H1 (cell line): ENCODE measurements at regions of chr17 and their contacts with region 1.

Region 1: DNA sequence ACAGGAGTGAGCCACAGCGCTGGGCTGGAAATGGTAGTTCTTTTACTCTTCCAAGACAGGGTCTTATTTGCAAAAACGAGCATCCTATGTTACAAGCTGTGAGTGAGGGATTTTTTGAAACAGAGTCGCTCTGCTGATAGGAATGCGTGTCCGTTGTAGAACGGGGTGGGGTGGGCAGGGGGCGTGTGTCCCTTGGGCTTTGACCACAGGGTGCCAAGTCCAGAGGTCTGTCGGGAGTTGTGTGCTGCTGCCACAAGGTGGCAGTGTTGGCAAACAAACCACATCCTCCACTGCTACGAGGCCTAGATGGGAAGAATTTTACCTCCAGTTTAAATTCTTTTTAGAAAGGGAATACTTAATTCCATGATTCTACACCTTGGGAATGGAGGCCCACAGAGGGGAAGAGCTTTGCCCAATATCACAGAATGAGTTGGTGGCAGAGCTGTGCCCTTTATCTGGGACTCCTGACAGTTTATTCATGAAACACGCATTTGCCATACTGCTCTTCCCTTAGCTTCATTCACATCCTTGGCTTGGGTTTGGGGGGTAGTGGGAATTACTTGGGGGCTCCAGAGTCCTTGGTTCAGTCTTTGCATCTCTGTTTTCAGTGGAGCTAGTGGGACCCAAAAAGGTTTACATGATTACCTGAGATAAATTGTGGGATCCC is 30.6 kb upstream of the ETV4 start:
- DNase-seq: peak; percentile 73 to 84
- H3K4me3 ChIP-seq: peak overlapping the region in 3 of 4 experiments; percentile 28 to 46 (median 37); a peak in 3 of 8 replicates
- H3K27ac ChIP-seq: no peak overlapping the region
- H3K4me1 ChIP-seq: peaks cover 6 to 21% (median 13%) of the 10 kb centered on the region in 4 experiments; a peak in 5 of 7 replicates
- H3K27me3 ChIP-seq: no peaks in the 10 kb centered on the region
- CTCF ChIP-seq: peak; percentile 86 to 97 (median 91)
- EP300 ChIP-seq: no peak
- POLR2A ChIP-seq: no peak
- RAD21 ChIP-seq: peak; percentile 99

Region 2: GRCh38 chr17:43524945-43525575 is 51.6 kb before region 1 on chr17:
- CTCF ChIA-PET with region 1: interaction called, 45 read pairs
- POLR2A ChIA-PET with region 1: interaction called, 7 read pairs
- DNase-seq: no peak
- H3K4me3 ChIP-seq: no peak overlapping the region
- H3K27ac ChIP-seq: no peak overlapping the region
- H3K4me1 ChIP-seq: peaks cover 11 to 32% (median 16%) of the 10 kb centered on the region in 4 experiments
- H3K27me3 ChIP-seq: no peaks in the 10 kb centered on the region
- CTCF ChIP-seq: no peak
- EP300 ChIP-seq: no peak
- POLR2A ChIP-seq: no peak
- RAD21 ChIP-seq: no peak

Region 3: DNA sequence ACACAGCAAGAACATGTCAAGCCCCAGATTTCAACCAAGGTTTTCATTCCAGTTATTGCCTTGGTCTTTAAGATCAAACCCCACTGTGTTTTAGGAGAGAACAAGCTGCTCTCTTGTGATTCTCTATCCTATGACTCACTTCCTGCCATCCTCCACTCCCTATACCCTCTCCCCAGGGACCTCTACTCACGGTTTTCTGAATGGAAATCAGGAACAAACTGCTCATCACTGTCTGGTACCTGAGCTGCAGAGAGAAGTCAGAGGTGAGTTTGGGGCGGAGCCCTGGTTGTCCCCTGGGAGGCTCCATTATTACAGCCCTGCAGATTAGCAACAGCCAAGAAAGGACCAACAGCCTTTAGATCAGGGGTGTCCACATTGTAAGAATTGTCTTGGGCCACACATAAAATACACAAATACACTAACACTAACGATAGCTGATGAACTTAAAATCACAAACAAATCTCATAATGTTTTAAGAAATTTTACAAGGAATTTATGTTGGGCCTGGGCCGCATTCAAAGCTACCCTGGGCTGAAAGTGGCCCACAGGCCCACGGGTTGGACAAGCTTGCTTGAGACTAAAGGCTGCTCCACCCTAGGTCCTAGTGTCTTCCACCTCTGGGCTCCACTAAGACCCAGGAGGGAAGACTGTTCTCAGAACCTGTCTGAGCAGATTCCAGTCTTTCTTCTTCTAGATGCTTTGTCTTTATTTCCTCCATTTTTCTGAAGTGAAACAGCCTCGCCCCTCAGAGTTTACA is 40.3 kb before region 1 on chr17:
- CTCF ChIA-PET with region 1: interaction called, 29 read pairs
- POLR2A ChIA-PET with region 1: no interaction called
- DNase-seq: no peak
- H3K4me3 ChIP-seq: no peak overlapping the region
- H3K27ac ChIP-seq: no peak overlapping the region
- H3K4me1 ChIP-seq: peaks cover 11 to 26% (median 12%) of the 10 kb centered on the region in 4 experiments
- H3K27me3 ChIP-seq: no peaks in the 10 kb centered on the region
- CTCF ChIP-seq: no peak
- EP300 ChIP-seq: no peak
- POLR2A ChIP-seq: no peak
- RAD21 ChIP-seq: no peak

Region 4: DNA sequence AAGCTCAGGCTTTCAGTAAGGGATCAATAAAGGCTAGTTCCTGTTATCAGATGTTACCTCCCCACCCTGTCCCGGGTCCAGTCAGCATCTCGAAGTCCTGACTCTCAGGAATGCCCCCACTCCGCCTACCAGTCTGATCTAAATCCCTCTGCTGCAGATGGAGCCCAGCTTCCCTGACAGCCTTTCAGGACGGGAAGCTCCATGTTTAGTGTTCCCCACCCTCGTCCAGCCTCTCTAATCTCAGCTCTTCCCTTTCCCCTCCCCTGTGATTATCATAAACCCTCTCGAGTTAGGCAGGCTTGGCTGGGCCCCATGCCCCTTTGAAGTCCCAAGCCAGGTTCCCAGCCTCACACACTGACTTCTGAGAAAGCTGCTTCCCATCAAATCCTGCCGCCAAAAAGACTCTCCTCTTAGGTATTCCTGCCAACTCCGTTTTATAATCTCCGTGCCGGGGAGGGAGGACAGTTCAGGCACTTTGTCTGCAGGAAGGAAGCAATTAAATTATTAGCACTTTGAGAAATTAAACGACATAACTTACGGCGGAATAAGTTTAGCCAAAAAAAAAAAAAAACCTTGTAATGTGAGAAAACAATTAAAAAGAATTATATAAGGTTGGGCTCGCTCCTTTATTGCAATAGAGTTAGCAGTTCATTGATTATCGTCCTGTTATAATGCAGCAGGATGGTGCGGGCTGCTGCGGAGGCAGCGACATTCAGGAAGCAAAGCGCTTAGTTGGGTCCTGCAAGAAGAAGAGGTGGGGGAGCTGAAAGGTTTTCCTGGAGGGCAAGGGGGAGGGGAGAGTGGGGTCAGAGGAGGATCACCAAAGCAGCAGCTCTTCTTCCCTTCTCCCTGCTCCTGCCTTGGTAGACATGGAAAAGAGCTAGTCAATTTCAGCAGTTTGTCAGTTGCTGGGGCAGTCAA is 13.8 kb before region 1 on chr17:
- CTCF ChIA-PET with region 1: interaction called, 65 read pairs
- POLR2A ChIA-PET with region 1: interaction called, 6 read pairs
- DNase-seq: no peak
- H3K4me3 ChIP-seq: peak overlapping the region in 2 of 4 experiments; percentile 14 to 43; a peak in 3 of 8 replicates
- H3K27ac ChIP-seq: no peak overlapping the region
- H3K4me1 ChIP-seq: peaks cover 13 to 24% (median 20%) of the 10 kb centered on the region in 4 experiments
- H3K27me3 ChIP-seq: peaks cover 0 to 3% (median 1%) of the 10 kb centered on the region in 4 experiments; a peak in 3 of 7 replicates
- CTCF ChIP-seq: no peak
- EP300 ChIP-seq: no peak
- POLR2A ChIP-seq: no peak
- RAD21 ChIP-seq: no peak

Region 5: GRCh38 chr17:43645765-43646481 is 69.2 kb after region 1 on chr17:
- CTCF ChIA-PET with region 1: interaction called, 23 read pairs
- POLR2A ChIA-PET with region 1: interaction called, 3 read pairs
- DNase-seq: peak in 1 of 2 experiments; percentile 78
- H3K4me3 ChIP-seq: peak overlapping the region; percentile 26 to 71 (median 44); a peak in 7 of 8 replicates
- H3K27ac ChIP-seq: no peak overlapping the region
- H3K4me1 ChIP-seq: peaks cover 0 to 6% (median 2%) of the 10 kb centered on the region in 4 experiments; a peak in 2 of 7 replicates
- H3K27me3 ChIP-seq: peaks cover 0 to 20% (median 6%) of the 10 kb centered on the region in 4 experiments; a peak in 4 of 7 replicates
- CTCF ChIP-seq: peak; percentile 6 to 48 (median 48); a peak in 3 of 4 replicates
- EP300 ChIP-seq: no peak
- POLR2A ChIP-seq: no peak
- RAD21 ChIP-seq: peak; percentile 11 to 48; a peak in 2 of 4 replicates

Region 6: DNA sequence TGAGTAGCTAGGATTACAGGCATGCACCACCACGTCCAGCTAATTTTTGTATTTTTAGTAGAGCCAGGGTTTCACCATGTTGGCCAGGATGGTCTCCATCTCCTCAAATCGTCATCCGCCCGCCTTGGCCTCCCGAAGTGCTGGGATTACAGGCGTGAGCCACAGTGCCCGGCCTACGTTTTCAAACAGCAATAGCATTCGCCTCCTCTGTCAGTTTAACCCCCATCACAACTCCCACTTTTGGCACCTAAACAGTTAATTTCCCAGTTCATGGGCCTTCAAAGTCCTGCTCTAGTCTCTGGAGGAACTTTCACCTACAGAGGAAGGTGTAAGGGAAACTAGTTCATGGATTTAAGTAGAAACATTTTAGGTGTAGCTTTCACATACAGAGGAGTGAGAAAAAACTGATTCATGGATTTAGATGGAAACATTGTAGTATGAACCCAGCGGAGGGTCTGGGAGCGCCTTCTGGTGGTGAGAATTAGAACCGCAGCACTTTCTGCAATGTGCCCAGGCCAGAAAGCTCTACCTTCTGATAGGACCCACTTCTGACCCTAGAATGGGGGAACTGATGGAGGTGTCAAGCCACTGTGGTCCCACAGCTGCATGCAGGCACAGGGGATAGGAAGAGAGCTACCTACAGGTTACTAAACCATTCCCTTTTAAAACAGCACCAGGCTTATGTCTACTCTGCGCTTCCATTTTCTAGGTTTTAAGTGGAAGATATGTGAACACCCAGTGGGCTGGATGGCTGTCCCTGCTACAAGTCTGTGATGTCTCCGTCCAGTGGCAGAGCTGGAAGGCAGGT is 97.0 kb after region 1 on chr17:
- CTCF ChIA-PET with region 1: no interaction called
- POLR2A ChIA-PET with region 1: interaction called, 11 read pairs
- DNase-seq: peak in 1 of 2 experiments; percentile 93
- H3K4me3 ChIP-seq: no peak overlapping the region
- H3K27ac ChIP-seq: no peak overlapping the region
- H3K4me1 ChIP-seq: peaks cover 0 to 20% (median 13%) of the 10 kb centered on the region in 4 experiments; a peak in 6 of 7 replicates
- H3K27me3 ChIP-seq: 0 out of 7 replicates have a peak, but pooled peaks cover 0 to 2% (median 0%) of the 10 kb centered on the region in 4 experiments
- CTCF ChIP-seq: peak; percentile 84 to 92 (median 91)
- EP300 ChIP-seq: no peak
- POLR2A ChIP-seq: no peak
- RAD21 ChIP-seq: peak; percentile 94 to 95

Region 7: GRCh38 chr17:43760254-43760852 is 183.7 kb after region 1 on chr17:
- CTCF ChIA-PET with region 1: interaction called, 220 read pairs
- POLR2A ChIA-PET with region 1: no interaction called
- DNase-seq: peak; percentile 95 to 98
- H3K4me3 ChIP-seq: no peak overlapping the region
- H3K27ac ChIP-seq: no peak overlapping the region
- H3K4me1 ChIP-seq: peaks cover 4 to 21% (median 8%) of the 10 kb centered on the region in 4 experiments; a peak in 6 of 7 replicates
- H3K27me3 ChIP-seq: peaks cover 0 to 17% (median 10%) of the 10 kb centered on the region in 4 experiments; a peak in 5 of 7 replicates
- CTCF ChIP-seq: peak; percentile 100
- EP300 ChIP-seq: no peak
- POLR2A ChIP-seq: no peak
- RAD21 ChIP-seq: peak; percentile 100